ENCODE measurements at regions of chr6 and their contacts with region 1.

Region 1: GRCh38 chr6:138428944-138429598 is 25.0 kb downstream of the HEBP2 start:
- DNase-seq: peak; percentile 54
- H3K4me3 ChIP-seq: no peak overlapping the region; a peak in 1 of 4 replicates
- H3K27ac ChIP-seq: no peak overlapping the region
- H3K4me1 ChIP-seq: peaks cover 0 to 5% of the 10 kb centered on the region in 2 experiments; a peak in 1 of 4 replicates
- H3K27me3 ChIP-seq: peaks cover 61% of the 10 kb centered on the region
- CTCF ChIP-seq: peak; percentile 69
- EP300 ChIP-seq: no peak
- RAD21 ChIP-seq: peak; percentile 71

Region 2: GRCh38 chr6:138115877-138116660 is 313.0 kb before region 1 on chr6:
- CTCF ChIA-PET with region 1: interaction called, 11 read pairs
- POLR2A ChIA-PET with region 1: no interaction called
- DNase-seq: peak; percentile 51
- H3K4me3 ChIP-seq: no peak overlapping the region; a peak in 1 of 4 replicates
- H3K27ac ChIP-seq: no peak overlapping the region
- H3K4me1 ChIP-seq: no peaks in the 10 kb centered on the region
- H3K27me3 ChIP-seq: peaks cover 16% of the 10 kb centered on the region; the same call in 1 of the 2 replicates
- CTCF ChIP-seq: peak; percentile 71
- EP300 ChIP-seq: no peak
- RAD21 ChIP-seq: peak; percentile 87

Region 3: GRCh38 chr6:138465007-138465645 is 36.1 kb after region 1 on chr6:
- CTCF ChIA-PET with region 1: interaction called, 10 read pairs
- POLR2A ChIA-PET with region 1: no interaction called
- DNase-seq: no peak
- H3K4me3 ChIP-seq: no peak overlapping the region
- H3K27ac ChIP-seq: no peak overlapping the region; a peak in 1 of 4 replicates
- H3K4me1 ChIP-seq: no peaks in the 10 kb centered on the region; a peak in 1 of 4 replicates
- H3K27me3 ChIP-seq: no peaks in the 10 kb centered on the region; the same call in 1 of the 2 replicates
- CTCF ChIP-seq: no peak
- EP300 ChIP-seq: no peak
- RAD21 ChIP-seq: no peak

Region 4: GRCh38 chr6:138517635-138518034 is 88.6 kb after region 1 on chr6:
- CTCF ChIA-PET with region 1: interaction called, 18 read pairs
- POLR2A ChIA-PET with region 1: no interaction called
- DNase-seq: peak; percentile 4
- H3K4me3 ChIP-seq: no peak overlapping the region
- H3K27ac ChIP-seq: no peak overlapping the region
- H3K4me1 ChIP-seq: no peaks in the 10 kb centered on the region
- H3K27me3 ChIP-seq: peaks cover 24% of the 10 kb centered on the region
- CTCF ChIP-seq: peak; percentile 44; the same call in 1 of the 2 replicates
- EP300 ChIP-seq: no peak
- RAD21 ChIP-seq: peak; percentile 14; the same call in 1 of the 2 replicates